ENCODE measurements at regions of chr17 and their contacts with region 1.

Region 1: DNA sequence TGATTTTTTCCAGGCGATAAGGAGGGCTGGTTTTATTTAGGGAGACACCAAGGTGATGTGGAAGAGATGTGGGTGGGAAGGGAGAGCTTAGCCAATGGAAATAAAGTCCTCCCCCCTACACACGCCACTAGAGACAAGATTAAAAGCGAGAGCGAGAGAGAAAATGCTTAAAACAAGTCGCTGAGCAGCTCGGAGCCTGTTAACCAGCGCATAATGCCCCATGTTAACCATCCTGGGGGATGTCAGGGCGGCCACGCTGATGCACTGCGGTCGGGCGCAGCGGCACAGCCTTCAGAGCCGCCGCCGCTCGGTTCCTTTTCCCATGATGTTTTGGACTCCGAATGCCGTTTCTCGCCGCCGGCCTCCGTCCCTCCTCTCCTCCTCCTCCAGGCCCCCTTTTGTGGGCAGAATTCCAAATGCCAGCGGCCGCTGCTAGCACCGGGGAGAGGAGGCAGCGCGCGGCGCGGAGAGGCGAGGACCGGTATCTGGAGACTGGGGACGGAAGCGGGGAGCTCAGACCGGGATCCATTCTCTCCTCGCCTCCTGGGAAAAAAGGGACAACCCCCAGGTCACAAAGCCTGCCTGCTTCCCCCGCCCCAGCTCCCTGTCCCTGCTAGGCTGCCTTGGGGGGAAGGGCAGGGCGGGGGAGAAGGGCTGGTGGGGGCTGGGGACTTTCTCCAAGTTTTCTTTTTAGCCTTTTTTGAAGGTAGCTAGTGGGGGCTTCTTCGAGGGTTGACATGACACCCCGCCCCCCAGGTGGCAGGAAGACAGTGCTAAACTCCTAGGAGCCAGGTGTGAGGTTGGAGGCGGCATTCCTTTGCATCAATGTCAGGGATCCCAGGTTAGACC is 98.1 kb upstream of the CCL2 start:
- DNase-seq: peak; percentile 74
- H3K4me3 ChIP-seq: peak overlapping the region in 1 of 2 experiments; percentile 31; a peak in 1 of 4 replicates
- H3K27ac ChIP-seq: no peak overlapping the region
- H3K4me1 ChIP-seq: peaks cover 0 to 3% of the 10 kb centered on the region in 2 experiments; a peak in 1 of 4 replicates
- H3K27me3 ChIP-seq: no peaks in the 10 kb centered on the region
- CTCF ChIP-seq: no peak
- EP300 ChIP-seq: no peak
- RAD21 ChIP-seq: no peak

Region 2: GRCh38 chr17:34068506-34069035 is 88.4 kb before region 1 on chr17:
- CTCF ChIA-PET with region 1: no interaction called
- POLR2A ChIA-PET with region 1: no interaction called
- DNase-seq: no peak
- H3K4me3 ChIP-seq: no peak overlapping the region
- H3K27ac ChIP-seq: no peak overlapping the region
- H3K4me1 ChIP-seq: no peaks in the 10 kb centered on the region
- H3K27me3 ChIP-seq: no peaks in the 10 kb centered on the region
- CTCF ChIP-seq: no peak
- EP300 ChIP-seq: no peak
- RAD21 ChIP-seq: no peak

Region 3: GRCh38 chr17:34171245-34171818 is 14.4 kb after region 1 on chr17:
- CTCF ChIA-PET with region 1: interaction called, 37 read pairs
- POLR2A ChIA-PET with region 1: no interaction called
- DNase-seq: peak; percentile 62
- H3K4me3 ChIP-seq: no peak overlapping the region; a peak in 1 of 4 replicates
- H3K27ac ChIP-seq: no peak overlapping the region
- H3K4me1 ChIP-seq: no peaks in the 10 kb centered on the region; a peak in 1 of 4 replicates
- H3K27me3 ChIP-seq: no peaks in the 10 kb centered on the region
- CTCF ChIP-seq: peak; percentile 87
- EP300 ChIP-seq: no peak
- RAD21 ChIP-seq: peak; percentile 56